ENCODE measurements at regions of chr16 and their contacts with region 1.

Region 1: GRCh38 chr16:50719518-50720337 is 22.2 kb upstream of the CYLD start:
- DNase-seq: peak in 1 of 2 experiments; percentile 53
- H3K4me3 ChIP-seq: no peak overlapping the region
- H3K27ac ChIP-seq: no peak overlapping the region
- H3K4me1 ChIP-seq: peaks cover 0 to 9% (median 3%) of the 10 kb centered on the region in 4 experiments; a peak in 5 of 7 replicates
- H3K27me3 ChIP-seq: no peaks in the 10 kb centered on the region
- CTCF ChIP-seq: peak; percentile 35 to 55 (median 43); a peak in 3 of 4 replicates
- EP300 ChIP-seq: no peak
- POLR2A ChIP-seq: no peak
- RAD21 ChIP-seq: peak; percentile 15 to 29; a peak in 2 of 4 replicates

Region 2: DNA sequence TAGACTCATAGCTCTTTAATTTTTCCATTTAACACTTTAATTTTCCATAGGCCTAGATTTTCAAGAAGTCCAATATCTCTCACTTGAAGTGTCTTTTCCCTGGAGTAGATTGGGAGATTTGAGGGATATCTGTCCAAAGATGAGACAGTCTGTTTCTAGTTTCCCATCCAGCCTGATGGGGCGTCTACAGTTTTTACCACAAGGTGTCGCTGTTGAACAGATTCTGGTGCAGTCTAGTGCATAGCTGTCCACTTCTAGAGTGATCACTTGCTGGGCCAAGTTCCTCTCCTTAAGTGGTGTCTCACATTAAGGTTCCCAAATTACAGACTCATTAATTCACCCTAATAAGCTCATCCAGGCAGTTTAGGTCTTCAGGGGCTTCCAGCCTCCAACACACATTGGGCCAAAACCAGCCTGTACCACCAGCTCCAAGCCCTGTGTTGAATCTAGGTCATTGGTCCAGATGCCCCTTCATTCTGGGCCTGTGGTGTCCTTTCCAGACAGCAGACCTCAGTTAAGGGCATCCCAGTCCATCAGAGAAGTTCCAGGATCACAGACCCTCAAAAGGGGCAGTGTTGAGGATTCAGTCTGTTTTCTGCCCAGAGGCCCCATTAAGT is 48.0 kb before region 1 on chr16:
- CTCF ChIA-PET with region 1: interaction called, 15 read pairs
- POLR2A ChIA-PET with region 1: no interaction called
- DNase-seq: peak in 1 of 2 experiments; percentile 74
- H3K4me3 ChIP-seq: no peak overlapping the region; a peak in 1 of 8 replicates
- H3K27ac ChIP-seq: no peak overlapping the region
- H3K4me1 ChIP-seq: peaks cover 0 to 2% (median 0%) of the 10 kb centered on the region in 4 experiments; a peak in 1 of 7 replicates
- H3K27me3 ChIP-seq: no peaks in the 10 kb centered on the region
- CTCF ChIP-seq: peak; percentile 37 to 83 (median 78)
- EP300 ChIP-seq: no peak
- POLR2A ChIP-seq: no peak
- RAD21 ChIP-seq: peak; percentile 70 to 76

Region 3: DNA sequence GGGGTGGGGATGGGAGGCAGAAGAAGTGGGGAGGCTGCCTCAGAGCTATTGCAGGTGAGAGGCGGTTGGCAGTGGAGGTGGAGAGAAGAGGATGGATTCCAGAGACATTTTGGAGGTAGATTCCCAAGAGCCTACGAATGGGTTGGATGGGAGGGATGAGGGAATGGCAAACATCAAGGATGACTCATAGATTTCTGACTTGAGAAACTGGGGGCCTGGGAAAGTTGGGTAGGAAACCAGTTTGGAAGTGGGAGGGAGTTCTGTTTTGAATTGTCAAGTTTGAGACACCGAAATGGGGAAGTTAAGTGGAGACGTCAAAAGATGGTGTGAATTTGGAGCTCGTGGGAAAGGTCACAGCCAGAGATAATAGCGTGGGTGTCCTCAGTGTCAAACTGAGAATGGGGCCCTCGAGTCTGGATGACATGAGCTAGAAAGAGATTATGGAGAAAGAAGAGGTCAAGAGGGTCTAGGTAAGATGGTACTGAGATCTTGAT is 15.9 kb after region 1 on chr16:
- CTCF ChIA-PET with region 1: interaction called, 17 read pairs
- POLR2A ChIA-PET with region 1: no interaction called
- DNase-seq: no peak
- H3K4me3 ChIP-seq: no peak overlapping the region
- H3K27ac ChIP-seq: no peak overlapping the region
- H3K4me1 ChIP-seq: no peaks in the 10 kb centered on the region
- H3K27me3 ChIP-seq: no peaks in the 10 kb centered on the region; a peak in 1 of 7 replicates
- CTCF ChIP-seq: no peak
- EP300 ChIP-seq: no peak
- POLR2A ChIP-seq: no peak
- RAD21 ChIP-seq: no peak